Mammary epithelial cell (primary cell): ENCODE measurements at regions of chr1 and their contacts with region 1.

Region 1: GRCh38 chr1:9984253-9984652 is 12.8 kb upstream of the RBP7 start:
- DNase-seq: no peak
- H3K4me3 ChIP-seq: no peak overlapping the region
- H3K27ac ChIP-seq: no peak overlapping the region
- H3K4me1 ChIP-seq: no peaks in the 10 kb centered on the region
- H3K27me3 ChIP-seq: no peaks in the 10 kb centered on the region
- CTCF ChIP-seq: no peak

Region 2: DNA sequence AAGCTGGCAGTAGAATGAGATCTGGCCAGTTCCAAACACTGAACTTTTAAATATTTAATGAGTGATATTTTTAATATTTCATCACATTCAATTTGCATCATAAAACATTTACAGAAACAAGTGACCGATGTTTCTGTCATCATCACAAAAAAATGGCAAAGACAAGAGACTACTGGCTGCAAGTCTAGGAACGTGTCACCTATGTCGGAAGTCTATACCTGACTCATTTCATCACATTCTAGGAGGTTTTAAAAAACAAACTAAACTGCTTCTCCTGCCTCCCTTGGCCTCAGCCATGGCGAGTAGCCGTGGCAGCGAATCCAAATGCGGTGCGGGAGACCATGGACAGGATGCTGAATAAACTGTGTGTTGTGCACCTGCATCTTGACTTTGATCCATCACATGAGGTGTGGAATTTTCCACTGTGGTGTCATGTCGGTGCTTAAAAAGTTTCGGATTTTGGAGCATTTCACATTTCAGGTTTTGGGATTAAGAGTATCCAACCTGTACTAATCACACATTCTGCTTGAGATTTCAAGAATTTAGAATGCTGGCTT is 203.6 kb before region 1 on chr1:
- CTCF ChIA-PET with region 1: no interaction called
- dilution Hi-C with region 1: no loop called
- in situ Hi-C with region 1: no loop called
- intact Hi-C with region 1: no loop called
- DNase-seq: no peak
- H3K4me3 ChIP-seq: no peak overlapping the region
- H3K27ac ChIP-seq: no peak overlapping the region
- H3K4me1 ChIP-seq: peaks cover 16% of the 10 kb centered on the region
- H3K27me3 ChIP-seq: no peaks in the 10 kb centered on the region
- CTCF ChIP-seq: no peak

Region 3: GRCh38 chr1:9929431-9930385 is 54.5 kb before region 1 on chr1:
- CTCF ChIA-PET with region 1: no interaction called
- dilution Hi-C with region 1: loop called (anchors 5 kb)
- in situ Hi-C with region 1: no loop called
- intact Hi-C with region 1: no loop called
- DNase-seq: no peak
- H3K4me3 ChIP-seq: no peak overlapping the region
- H3K27ac ChIP-seq: no peak overlapping the region
- H3K4me1 ChIP-seq: no peaks in the 10 kb centered on the region
- H3K27me3 ChIP-seq: no peaks in the 10 kb centered on the region
- CTCF ChIP-seq: no peak

Region 4: DNA sequence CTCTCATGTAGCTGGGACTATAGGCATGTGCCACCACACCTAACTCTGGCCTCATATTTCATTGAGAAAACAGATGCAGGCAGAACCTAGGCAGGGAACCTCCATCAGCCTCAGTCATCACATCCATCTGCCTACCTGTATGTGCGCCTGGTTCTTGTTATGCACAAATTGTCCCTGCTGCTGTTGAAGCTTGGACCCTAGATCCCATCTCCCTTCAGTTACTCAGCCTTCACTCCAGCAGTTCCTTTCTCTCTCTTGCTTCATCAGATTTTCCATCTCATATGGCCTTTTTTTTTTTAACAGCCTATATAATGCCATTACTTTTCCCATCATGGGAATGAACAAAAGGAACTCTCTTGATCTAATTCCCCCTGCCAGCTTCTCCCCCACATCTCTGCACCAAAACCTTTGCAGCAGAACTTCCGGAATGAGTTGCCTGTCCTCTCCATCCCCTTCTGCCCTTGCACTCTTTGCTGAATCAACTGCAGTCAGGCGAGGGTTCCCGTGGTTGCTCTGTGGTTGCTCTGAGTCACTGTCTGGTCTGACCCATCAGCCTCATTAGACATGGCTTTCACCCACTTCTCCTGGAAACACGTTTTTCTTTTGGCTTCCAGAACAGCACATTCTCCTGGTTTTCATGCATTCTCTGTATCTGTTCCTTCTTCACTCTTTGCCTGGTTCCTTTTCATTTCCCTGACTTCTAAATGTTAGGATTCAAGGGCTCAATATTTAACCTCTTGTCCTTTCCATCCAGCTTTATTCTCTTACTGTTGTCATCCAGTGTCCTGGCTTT is 90.0 kb after region 1 on chr1:
- CTCF ChIA-PET with region 1: no interaction called
- dilution Hi-C with region 1: loop called (anchors 5 kb)
- in situ Hi-C with region 1: no loop called
- intact Hi-C with region 1: no loop called
- DNase-seq: peak; percentile 96
- H3K4me3 ChIP-seq: no peak overlapping the region
- H3K27ac ChIP-seq: peak overlapping the region; percentile 62
- H3K4me1 ChIP-seq: peaks cover 32% of the 10 kb centered on the region
- H3K27me3 ChIP-seq: no peaks in the 10 kb centered on the region
- CTCF ChIP-seq: no peak